ENCODE measurements at regions of chr9 and their contacts with region 1.

Region 1: DNA sequence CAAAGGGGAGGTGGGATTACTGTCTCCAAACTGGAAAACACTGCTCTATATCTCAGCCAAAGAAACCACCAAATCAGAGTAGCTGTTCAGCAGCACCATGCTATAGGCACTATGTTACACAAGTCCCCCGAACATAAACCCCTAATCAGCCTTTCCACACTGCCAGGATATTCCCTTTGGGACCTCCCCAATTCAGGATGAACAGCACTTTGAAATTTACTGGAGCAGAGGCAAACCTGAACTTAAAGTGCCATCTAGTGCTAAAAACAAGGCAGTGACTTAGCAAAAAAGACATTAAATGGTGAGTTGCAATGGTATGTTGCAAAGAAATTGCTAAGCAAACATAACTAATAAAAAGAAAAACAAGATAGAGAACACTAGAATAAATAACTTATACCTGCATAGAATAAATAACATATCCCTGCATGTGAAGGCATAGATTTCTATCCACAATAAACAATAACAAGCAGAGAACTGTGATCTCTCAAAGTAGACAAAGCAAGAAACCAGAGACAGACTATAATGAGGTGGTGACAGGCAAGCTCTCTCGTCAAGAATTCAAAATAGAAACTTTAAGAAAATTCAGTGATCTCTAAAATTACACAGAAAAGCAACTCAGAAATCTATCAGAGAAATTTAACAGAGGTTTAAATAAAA is 584.4 kb upstream of the ACO1 start:
- DNase-seq: no peak
- ATAC-seq: no peak
- H3K4me3 ChIP-seq: no peak overlapping the region
- H3K27ac ChIP-seq: no peak overlapping the region
- H3K4me1 ChIP-seq: no peaks in the 10 kb centered on the region
- H3K27me3 ChIP-seq: no peaks in the 10 kb centered on the region
- CTCF ChIP-seq: peak in 4 of 5 experiments; percentile 14 to 46 (median 35)
- POLR2A ChIP-seq: no peak

Region 2: GRCh38 chr9:31119882-31120454 is 680.1 kb before region 1 on chr9:
- in situ Hi-C with region 1: loop called in 1 of 4 experiments (anchors 25 kb)
- intact Hi-C with region 1: no loop called
- DNase-seq: no peak
- ATAC-seq: no peak
- H3K4me3 ChIP-seq: no peak overlapping the region
- H3K27ac ChIP-seq: no peak overlapping the region
- H3K4me1 ChIP-seq: no peaks in the 10 kb centered on the region
- H3K27me3 ChIP-seq: no peaks in the 10 kb centered on the region
- CTCF ChIP-seq: peak in 1 of 5 experiments; percentile 34
- POLR2A ChIP-seq: no peak

Region 3: DNA sequence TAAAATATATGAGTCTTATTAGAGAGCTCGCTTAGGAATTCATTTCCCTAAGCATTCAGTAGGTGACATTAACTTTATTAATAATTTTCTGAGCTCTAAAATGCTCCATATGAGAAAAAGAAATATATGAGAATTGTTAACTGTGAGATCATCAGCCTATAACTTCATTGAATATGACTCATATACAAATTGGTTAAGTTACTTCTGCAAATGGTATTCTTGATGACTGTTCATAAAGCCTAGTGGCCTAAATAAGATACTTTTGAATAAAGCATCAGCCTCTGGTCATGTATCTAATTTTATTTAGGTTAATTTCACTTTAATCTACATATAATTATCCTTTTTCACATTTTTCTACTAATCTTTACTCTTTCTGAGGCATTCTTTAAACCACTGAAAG is 125.8 kb before region 1 on chr9:
- in situ Hi-C with region 1: no loop called
- intact Hi-C with region 1: no loop called
- DNase-seq: no peak
- ATAC-seq: no peak
- H3K4me3 ChIP-seq: no peak overlapping the region
- H3K27ac ChIP-seq: no peak overlapping the region
- H3K4me1 ChIP-seq: no peaks in the 10 kb centered on the region
- H3K27me3 ChIP-seq: no peaks in the 10 kb centered on the region
- CTCF ChIP-seq: no peak
- POLR2A ChIP-seq: no peak

Region 4: DNA sequence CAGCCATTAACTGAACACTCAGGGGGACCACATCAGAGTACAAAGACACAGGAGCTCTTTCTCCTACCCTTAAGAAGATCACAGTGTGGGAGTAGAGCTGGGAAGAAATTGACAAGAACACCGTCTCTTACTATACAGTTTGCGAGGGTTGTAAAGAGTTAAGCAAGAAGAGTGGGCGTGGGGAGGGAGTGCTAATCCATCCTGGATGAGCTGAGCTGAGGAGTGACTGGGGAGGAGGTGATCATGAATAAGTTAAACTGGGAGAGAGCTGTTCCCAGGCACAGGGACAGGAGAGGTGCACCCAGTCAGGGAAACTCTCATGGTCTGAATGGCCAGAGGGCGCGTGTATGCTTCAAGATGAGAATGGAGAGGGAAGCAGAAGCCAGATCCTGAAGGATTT is 818.2 kb after region 1 on chr9:
- in situ Hi-C with region 1: no loop called
- intact Hi-C with region 1: no loop called
- DNase-seq: no peak
- ATAC-seq: no peak
- H3K4me3 ChIP-seq: no peak overlapping the region
- H3K27ac ChIP-seq: no peak overlapping the region
- H3K4me1 ChIP-seq: no peaks in the 10 kb centered on the region
- H3K27me3 ChIP-seq: peaks cover 0 to 7% (median 0%) of the 10 kb centered on the region in 3 donors
- CTCF ChIP-seq: no peak
- POLR2A ChIP-seq: no peak